ENCODE measurements at regions of chr5 and their contacts with region 1.

Region 1: DNA sequence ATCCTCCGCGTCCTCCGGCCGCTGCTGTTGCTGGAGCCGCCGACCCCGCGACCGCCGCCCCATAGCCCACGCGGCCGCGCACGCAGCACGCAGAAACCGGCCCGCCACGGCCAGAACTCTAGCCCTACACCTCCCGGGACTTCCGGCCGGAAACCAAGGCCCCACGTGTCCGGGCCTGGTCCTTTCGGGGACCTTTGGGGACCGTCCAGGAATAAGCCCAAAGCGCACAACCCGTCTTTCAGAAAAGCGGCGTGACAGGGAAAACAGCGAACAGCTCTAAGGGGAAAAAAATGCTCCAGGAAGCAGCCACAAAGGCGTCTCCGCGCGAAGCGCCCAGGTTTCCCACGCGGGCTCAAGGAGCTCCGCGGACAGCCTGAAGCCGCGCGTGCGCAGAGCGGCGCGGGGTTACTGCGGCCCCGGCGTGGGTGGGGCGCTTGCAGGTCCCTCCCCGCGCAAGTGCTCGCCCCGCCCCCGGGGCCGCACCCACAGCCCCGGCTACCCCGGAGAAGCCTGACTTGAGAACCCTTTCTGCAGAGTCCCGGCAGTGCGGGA is at the starts of genes NSUN2 and SRD5A1:
- DNase-seq: peak; percentile 88 to 98 (median 94)
- ATAC-seq: peak; percentile 94
- H3K4me3 ChIP-seq: peak within 1 kb of the TSS; percentile 92
- H3K4me3 Mint-ChIP-seq: peak within 1 kb of the TSS; percentile 89 to 98 (median 95)
- H3K27ac ChIP-seq: peak within 1 kb of the TSS; percentile 83
- H3K27ac Mint-ChIP-seq: peak within 1 kb of the TSS; percentile 87 to 99 (median 96)
- H3K4me1 ChIP-seq: peaks cover 15 to 22% of the 10 kb centered on the region in 2 donors
- H3K4me1 Mint-ChIP-seq: peaks cover 30 to 55% (median 47%) of the 10 kb centered on the region in 7 donors
- H3K27me3 ChIP-seq: no peaks in the 10 kb centered on the region
- H3K27me3 Mint-ChIP-seq: no peaks in the 10 kb centered on the region
- total RNA-seq, gene NSUN2: 52.4 to 87.2 (median 72.9) TPM
- total RNA-seq, gene SRD5A1: 3.4 to 11.9 (median 6.6) TPM

Region 2: GRCh38 chr5:5523066-5523505 is 1109.9 kb before region 1 on chr5:
- CTCF ChIA-PET with region 1: no interaction called
- POLR2A ChIA-PET with region 1: no interaction called
- intact Hi-C with region 1: loop called (anchors 2 kb)
- DNase-seq: peak in 7 of 9 donors; percentile 31 to 58 (median 50)
- ATAC-seq: peak; percentile 75
- H3K4me3 ChIP-seq: peak overlapping the region; percentile 48
- H3K4me3 Mint-ChIP-seq: peak overlapping the region in 9 of 10 donors; percentile 43 to 83 (median 70)
- H3K27ac ChIP-seq: no peak overlapping the region
- H3K27ac Mint-ChIP-seq: peak overlapping the region; percentile 0 to 90 (median 75)
- H3K4me1 ChIP-seq: peaks cover 0 to 3% of the 10 kb centered on the region in 2 donors
- H3K4me1 Mint-ChIP-seq: peaks cover 1 to 25% (median 17%) of the 10 kb centered on the region in 7 donors
- H3K27me3 ChIP-seq: no peaks in the 10 kb centered on the region
- H3K27me3 Mint-ChIP-seq: peaks cover 0 to 3% (median 0%) of the 10 kb centered on the region in 5 donors

Region 3: GRCh38 chr5:6686915-6687409 is 54.0 kb after region 1 on chr5:
- CTCF ChIA-PET with region 1: no interaction called
- POLR2A ChIA-PET with region 1: no interaction called
- intact Hi-C with region 1: no loop called
- DNase-seq: peak in 2 of 9 donors; percentile 19 to 30
- ATAC-seq: peak; percentile 64
- H3K4me3 ChIP-seq: no peak overlapping the region
- H3K4me3 Mint-ChIP-seq: peak overlapping the region in 7 of 10 donors; percentile 2 to 63 (median 30)
- H3K27ac ChIP-seq: no peak overlapping the region
- H3K27ac Mint-ChIP-seq: no peak overlapping the region
- H3K4me1 ChIP-seq: no peaks in the 10 kb centered on the region
- H3K4me1 Mint-ChIP-seq: peaks cover 0 to 11% (median 6%) of the 10 kb centered on the region in 7 donors
- H3K27me3 ChIP-seq: peaks cover 0 to 3% of the 10 kb centered on the region in 2 donors
- H3K27me3 Mint-ChIP-seq: peaks cover 35 to 76% (median 54%) of the 10 kb centered on the region in 5 donors

Region 4: DNA sequence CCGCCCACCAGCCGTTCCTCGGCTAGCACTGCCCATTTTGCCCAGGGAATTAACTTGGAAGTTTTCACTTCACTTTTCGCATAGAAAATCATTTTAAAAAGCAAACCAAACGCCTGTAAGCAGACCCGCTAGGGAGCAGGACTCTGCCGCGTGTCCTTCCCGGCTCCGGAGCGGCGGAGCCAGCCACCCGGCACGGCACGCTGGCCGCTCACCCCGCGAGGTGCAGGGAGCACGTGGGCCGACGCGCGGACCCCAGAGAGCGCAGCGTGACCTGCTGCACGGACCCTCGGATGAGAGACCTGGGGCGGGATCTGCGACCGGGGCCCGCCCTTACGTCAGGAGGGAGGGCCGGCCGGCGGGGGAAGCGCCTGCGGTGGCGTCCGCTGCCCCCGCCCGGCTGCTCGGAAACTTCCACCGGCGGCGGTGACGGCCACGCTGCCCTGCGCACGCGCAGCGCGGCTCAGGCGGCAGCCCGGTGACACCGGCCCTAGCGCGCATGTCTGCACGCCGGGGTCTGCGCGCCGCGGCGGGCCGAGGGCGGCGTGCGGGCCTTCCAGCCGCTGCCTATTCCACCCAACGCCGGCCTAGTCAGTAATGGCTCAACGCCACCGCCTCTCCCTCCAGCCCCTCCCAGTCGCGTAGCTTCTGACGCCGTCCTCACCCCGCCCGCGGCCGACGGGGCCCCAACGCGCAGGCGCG is 79.7 kb after region 1 on chr5:
- CTCF ChIA-PET with region 1: interaction called, 3 read pairs
- POLR2A ChIA-PET with region 1: interaction called, 10 read pairs
- intact Hi-C with region 1: loop called (anchors 1 kb)
- DNase-seq: peak; percentile 94 to 99 (median 98)
- ATAC-seq: peak; percentile 87
- H3K4me3 ChIP-seq: peak overlapping the region; percentile 95
- H3K4me3 Mint-ChIP-seq: peak overlapping the region; percentile 80 to 92 (median 89)
- H3K27ac ChIP-seq: peak overlapping the region; percentile 95
- H3K27ac Mint-ChIP-seq: peak overlapping the region; percentile 77 to 94 (median 92)
- H3K4me1 ChIP-seq: peaks cover 21 to 24% of the 10 kb centered on the region in 2 donors
- H3K4me1 Mint-ChIP-seq: peaks cover 26 to 44% (median 33%) of the 10 kb centered on the region in 7 donors
- H3K27me3 ChIP-seq: no peaks in the 10 kb centered on the region
- H3K27me3 Mint-ChIP-seq: peaks cover 0 to 4% (median 0%) of the 10 kb centered on the region in 5 donors

Region 5: GRCh38 chr5:6745706-6746222 is 112.8 kb after region 1 on chr5:
- CTCF ChIA-PET with region 1: interaction called, 4 read pairs
- POLR2A ChIA-PET with region 1: interaction called, 4 read pairs
- intact Hi-C with region 1: loop called (anchors 1 kb)
- DNase-seq: peak in 7 of 9 donors; percentile 33 to 62 (median 53)
- ATAC-seq: peak; percentile 85
- H3K4me3 ChIP-seq: no peak overlapping the region
- H3K4me3 Mint-ChIP-seq: no peak overlapping the region
- H3K27ac ChIP-seq: no peak overlapping the region
- H3K27ac Mint-ChIP-seq: peak overlapping the region in 3 of 9 donors; percentile 4 to 48 (median 36)
- H3K4me1 ChIP-seq: no peaks in the 10 kb centered on the region
- H3K4me1 Mint-ChIP-seq: peaks cover 2 to 10% (median 6%) of the 10 kb centered on the region in 7 donors
- H3K27me3 ChIP-seq: no peaks in the 10 kb centered on the region
- H3K27me3 Mint-ChIP-seq: no peaks in the 10 kb centered on the region

Region 6: DNA sequence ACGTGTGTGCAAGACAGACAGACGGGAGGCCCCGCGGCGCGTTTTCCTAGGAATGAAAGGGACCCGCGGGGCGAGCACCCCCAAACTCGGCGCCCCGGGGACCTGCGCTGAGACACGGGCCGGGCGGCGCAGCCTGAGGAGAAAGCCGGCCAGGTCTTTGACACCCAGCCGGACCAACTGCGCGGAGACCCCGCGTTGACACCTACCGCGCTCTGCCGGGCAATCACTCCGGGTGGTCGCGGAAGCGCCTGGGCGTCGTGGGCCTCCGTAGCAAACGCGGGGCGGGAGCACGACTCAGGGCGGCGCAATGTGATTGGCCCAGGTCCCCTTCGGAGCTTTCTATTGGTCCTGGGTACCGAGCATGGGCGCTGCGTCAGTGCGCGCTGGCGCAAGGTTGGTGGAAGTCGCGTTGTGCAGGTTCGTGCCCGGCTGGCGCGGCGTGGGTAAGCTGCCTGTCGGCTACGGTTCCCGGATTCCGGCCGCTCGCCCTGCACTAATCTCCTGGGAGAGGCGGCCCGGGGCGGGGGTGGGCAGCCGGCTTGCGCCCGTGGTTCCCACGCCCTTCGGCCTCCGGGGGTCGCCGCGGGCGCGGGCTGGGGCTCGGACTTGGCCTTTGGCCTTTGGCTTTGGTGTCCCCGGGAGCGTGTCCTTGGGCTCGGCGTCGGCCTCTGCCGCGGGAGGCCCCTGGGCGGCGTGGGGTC is 1235.9 kb after region 1 on chr5 and contains the starts of genes FASTKD3 and MTRR:
- CTCF ChIA-PET with region 1: no interaction called
- POLR2A ChIA-PET with region 1: interaction called, 4 read pairs
- intact Hi-C with region 1: loop called (anchors 2 to 5 kb)
- DNase-seq: peak; percentile 75 to 90 (median 87)
- ATAC-seq: peak; percentile 100
- H3K4me3 ChIP-seq: peak within 1 kb of the TSS; percentile 75
- H3K4me3 Mint-ChIP-seq: peak within 1 kb of the TSS; percentile 90 to 100 (median 96)
- H3K27ac ChIP-seq: peak within 1 kb of the TSS; percentile 87
- H3K27ac Mint-ChIP-seq: peak within 1 kb of the TSS; percentile 85 to 97 (median 93)
- H3K4me1 ChIP-seq: peaks cover 38 to 43% of the 10 kb centered on the region in 2 donors
- H3K4me1 Mint-ChIP-seq: peaks cover 53 to 84% (median 82%) of the 10 kb centered on the region in 7 donors
- H3K27me3 ChIP-seq: no peaks in the 10 kb centered on the region
- H3K27me3 Mint-ChIP-seq: no peaks in the 10 kb centered on the region
- total RNA-seq, gene FASTKD3: 4.2 to 15.3 (median 10.0) TPM
- total RNA-seq, gene MTRR: 65.7 to 83.2 (median 70.2) TPM

Measured in naive thymus-derived CD4-positive, alpha-beta T cell (primary cell).